ENCODE measurements at regions of chr1 and their contacts with region 1.

Region 1: DNA sequence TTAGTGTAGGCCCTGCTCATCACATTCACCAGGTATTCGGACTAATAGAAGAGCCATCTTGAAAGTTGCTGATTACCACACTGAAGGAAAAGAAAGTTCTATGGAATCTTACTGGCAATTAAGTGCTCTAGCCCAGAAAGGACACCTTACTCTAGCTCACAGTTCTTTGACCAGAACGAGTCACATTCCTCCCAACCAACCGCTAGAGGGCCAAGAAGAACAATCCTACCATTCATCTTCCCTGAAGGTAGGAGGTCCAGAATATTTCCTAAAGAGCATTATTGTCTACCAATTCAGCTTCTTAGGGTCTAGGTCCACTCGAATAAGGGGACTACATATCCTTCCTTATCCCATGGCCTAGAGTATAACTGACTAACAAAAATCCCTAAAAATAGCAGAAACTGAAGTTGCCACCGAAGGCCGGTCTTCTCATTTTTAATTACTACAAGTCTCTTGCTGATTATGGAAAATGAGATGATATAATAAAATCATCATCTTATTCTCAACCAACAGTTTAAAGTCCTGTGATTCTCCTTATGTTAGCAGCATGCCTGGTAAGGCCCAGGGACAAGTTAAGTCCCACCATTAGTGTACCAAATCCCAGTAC is 2.7 kb upstream of the FMO1 start:
- DNase-seq: peak; percentile 34
- ATAC-seq: peak; percentile 51
- H3K4me3 Mint-ChIP-seq: no peak overlapping the region
- H3K27ac Mint-ChIP-seq: no peak overlapping the region
- H3K4me1 Mint-ChIP-seq: no peaks in the 10 kb centered on the region
- H3K27me3 Mint-ChIP-seq: peaks cover 33% of the 10 kb centered on the region

Region 2: DNA sequence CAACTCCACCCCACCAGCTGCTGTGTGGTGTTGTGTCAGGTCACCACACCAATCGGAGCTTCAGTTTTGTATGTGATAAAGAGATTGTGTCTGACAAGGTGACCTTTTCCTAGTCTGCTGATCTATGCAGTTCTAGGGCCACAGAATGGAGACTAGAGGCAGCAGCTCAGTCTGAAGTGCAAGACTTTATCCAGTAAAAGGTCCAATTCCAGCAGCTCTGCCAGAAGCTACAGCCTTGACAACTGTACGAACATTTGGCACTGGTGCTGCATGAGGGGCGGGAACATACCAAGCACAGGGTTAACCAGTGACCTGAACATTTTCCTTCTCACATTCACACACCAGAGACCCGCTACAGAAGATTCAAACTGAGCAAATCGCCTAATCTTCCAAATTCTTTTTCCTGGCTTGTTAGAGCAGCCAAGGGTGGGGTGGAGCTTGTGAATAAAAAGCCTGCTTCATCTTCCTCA is 12.1 kb after region 1 on chr1:
- CTCF ChIA-PET with region 1: interaction called, 11 read pairs
- POLR2A ChIA-PET with region 1: no interaction called
- DNase-seq: no peak
- ATAC-seq: no peak
- H3K4me3 Mint-ChIP-seq: no peak overlapping the region
- H3K27ac Mint-ChIP-seq: no peak overlapping the region
- H3K4me1 Mint-ChIP-seq: peaks cover 5% of the 10 kb centered on the region
- H3K27me3 Mint-ChIP-seq: peaks cover 18% of the 10 kb centered on the region

Region 3: DNA sequence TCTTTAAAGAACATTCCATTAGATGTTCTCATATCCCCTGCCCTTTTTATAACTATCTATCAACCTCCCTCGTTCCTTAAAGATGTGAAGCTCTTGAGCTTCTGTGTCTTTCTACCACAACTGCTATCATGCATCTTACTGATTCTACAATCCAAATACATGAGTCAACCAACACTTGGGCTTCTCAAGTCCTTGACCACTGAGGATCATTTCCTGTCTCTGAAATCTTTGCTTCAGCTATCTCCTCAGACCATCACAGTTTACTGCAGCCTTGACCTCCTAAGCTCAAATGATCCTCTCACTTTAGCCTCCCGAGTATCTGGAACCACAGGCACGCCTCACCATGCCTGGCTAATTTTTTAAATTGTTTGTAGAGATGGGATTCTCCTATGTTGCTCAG is 143.6 kb after region 1 on chr1:
- CTCF ChIA-PET with region 1: no interaction called
- POLR2A ChIA-PET with region 1: no interaction called
- DNase-seq: no peak
- ATAC-seq: no peak
- H3K4me3 Mint-ChIP-seq: no peak overlapping the region
- H3K27ac Mint-ChIP-seq: no peak overlapping the region
- H3K4me1 Mint-ChIP-seq: no peaks in the 10 kb centered on the region
- H3K27me3 Mint-ChIP-seq: no peaks in the 10 kb centered on the region